ENCODE measurements at regions of chr5 and their contacts with region 1.

Region 1: DNA sequence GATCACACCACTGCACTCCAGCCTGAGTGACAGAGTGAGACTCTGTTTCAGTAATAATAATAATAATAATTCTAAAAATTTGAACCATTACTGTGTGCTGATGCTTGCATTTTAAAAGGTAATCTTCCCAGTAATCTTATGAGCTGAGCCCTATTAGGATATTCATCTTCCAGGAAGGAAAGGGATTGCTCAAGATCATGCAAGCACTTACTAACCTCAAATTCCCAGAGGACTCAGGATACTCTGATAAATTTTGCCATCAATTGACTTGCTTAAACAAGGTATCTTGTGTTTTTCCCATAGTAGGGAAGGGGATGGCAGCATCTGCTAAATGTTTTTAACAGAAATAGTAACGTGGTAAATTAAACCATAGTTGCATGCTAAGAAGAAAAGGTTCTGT is 176.4 kb upstream of the MRPS30 start:
- DNase-seq: no peak
- ATAC-seq: no peak
- H3K4me3 ChIP-seq: no peak overlapping the region
- H3K27ac ChIP-seq: no peak overlapping the region
- H3K4me1 ChIP-seq: no peaks in the 10 kb centered on the region
- H3K27me3 ChIP-seq: no peaks in the 10 kb centered on the region
- CTCF ChIP-seq: no peak
- EP300 ChIP-seq: no peak
- POLR2A ChIP-seq: no peak
- RAD21 ChIP-seq: no peak

Region 2: GRCh38 chr5:44646016-44646415 is 13.7 kb after region 1 on chr5:
- CTCF ChIA-PET with region 1: no interaction called
- POLR2A ChIA-PET with region 1: no interaction called
- in situ Hi-C with region 1: no loop called
- intact Hi-C with region 1: loop called (anchors 2 kb)
- DNase-seq: no peak
- ATAC-seq: no peak
- H3K4me3 ChIP-seq: no peak overlapping the region
- H3K27ac ChIP-seq: no peak overlapping the region
- H3K4me1 ChIP-seq: no peaks in the 10 kb centered on the region
- H3K27me3 ChIP-seq: no peaks in the 10 kb centered on the region
- CTCF ChIP-seq: no peak
- EP300 ChIP-seq: no peak
- POLR2A ChIP-seq: no peak
- RAD21 ChIP-seq: no peak

Measured in HepG2 (cell line).